ENCODE measurements at regions of chr22 and their contacts with region 1.

Region 1: GRCh38 chr22:41197038-41197972 is 7.8 kb upstream of the L3MBTL2 start:
- DNase-seq: peak; percentile 84 to 88
- ATAC-seq: peak; percentile 95 to 97 (median 96)
- H3K4me3 ChIP-seq: peak overlapping the region; percentile 70 to 89 (median 85)
- H3K27ac ChIP-seq: peak overlapping the region in 8 of 10 donors; percentile 29 to 75 (median 54)
- H3K4me1 ChIP-seq: peaks cover 5 to 19% (median 17%) of the 10 kb centered on the region in 9 donors
- H3K27me3 ChIP-seq: no peaks in the 10 kb centered on the region
- CTCF ChIP-seq: peak in 5 of 9 donors; percentile 11 to 36 (median 21)

Region 2: GRCh38 chr22:41229730-41230400 is 32.6 kb after region 1 on chr22:
- intact Hi-C with region 1: loop called in 2 of 10 experiments (anchors 5 kb)
- DNase-seq: peak; percentile 51 to 61
- ATAC-seq: peak; percentile 51 to 83 (median 72)
- H3K4me3 ChIP-seq: no peak overlapping the region
- H3K27ac ChIP-seq: peak overlapping the region in 9 of 10 donors; percentile 47 to 81 (median 63)
- H3K4me1 ChIP-seq: peaks cover 10 to 45% (median 40%) of the 10 kb centered on the region in 9 donors
- H3K27me3 ChIP-seq: no peaks in the 10 kb centered on the region
- CTCF ChIP-seq: no peak

Region 3: DNA sequence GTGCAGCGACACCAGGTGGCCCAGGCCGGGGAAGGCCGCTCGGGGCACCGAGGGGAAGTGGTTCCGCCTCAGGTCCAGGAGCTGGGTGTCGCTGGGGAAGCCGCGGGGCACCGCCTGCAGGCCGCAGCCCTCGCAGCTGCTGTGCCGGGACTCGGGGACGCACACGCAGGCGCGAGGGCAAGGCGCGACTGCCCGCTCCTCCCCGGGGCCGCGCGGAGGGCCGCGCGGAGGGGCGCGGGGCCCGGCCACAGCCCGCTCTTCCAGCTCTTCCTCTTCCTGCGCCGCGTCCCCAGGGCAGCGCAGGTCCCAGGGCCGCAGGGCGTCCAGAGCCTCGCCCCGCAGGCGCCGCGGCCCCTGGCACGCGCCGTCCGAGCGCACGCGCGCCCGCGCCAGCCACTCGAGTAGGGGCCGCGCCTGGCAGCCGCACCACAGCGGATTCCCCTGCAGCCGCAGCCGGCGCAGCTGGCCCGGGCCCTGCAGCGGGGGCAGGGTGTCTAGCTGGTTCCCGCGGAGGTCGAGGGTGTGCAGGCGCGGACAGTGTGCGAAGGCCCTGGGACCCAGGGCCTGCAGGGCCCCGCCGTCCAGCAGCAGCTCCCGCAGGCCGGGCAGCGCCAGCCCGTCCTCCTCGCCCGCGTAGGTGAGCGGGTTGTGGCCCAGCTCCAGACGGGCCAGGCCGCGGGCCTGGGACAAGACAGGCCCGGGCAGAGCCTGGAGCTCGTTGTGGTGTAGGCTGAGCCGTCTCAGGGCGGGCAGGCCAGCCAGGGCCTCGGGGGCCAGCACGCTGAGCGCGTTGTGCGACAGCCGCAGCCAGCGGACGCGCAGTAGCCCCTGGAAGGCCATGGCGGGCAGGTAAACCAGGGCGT is 40.6 kb after region 1 on chr22:
- intact Hi-C with region 1: loop called in 2 of 10 experiments (anchors 5 kb)
- DNase-seq: peak; percentile 64 to 77
- ATAC-seq: peak; percentile 35 to 87 (median 74)
- H3K4me3 ChIP-seq: peak overlapping the region in 9 of 10 donors; percentile 28 to 55 (median 50)
- H3K27ac ChIP-seq: peak overlapping the region in 9 of 10 donors; percentile 46 to 76 (median 64)
- H3K4me1 ChIP-seq: peaks cover 8 to 37% (median 20%) of the 10 kb centered on the region in 9 donors
- H3K27me3 ChIP-seq: no peaks in the 10 kb centered on the region
- CTCF ChIP-seq: peak in 8 of 9 donors; percentile 35 to 77 (median 67)

Region 4: GRCh38 chr22:41261541-41262249 is 64.4 kb after region 1 on chr22:
- intact Hi-C with region 1: loop called in 1 of 10 experiments (anchors 2 kb)
- DNase-seq: peak in 1 of 2 donors; percentile 37
- ATAC-seq: peak; percentile 40 to 71 (median 59)
- H3K4me3 ChIP-seq: no peak overlapping the region
- H3K27ac ChIP-seq: peak overlapping the region; percentile 37 to 88 (median 82)
- H3K4me1 ChIP-seq: peaks cover 0 to 36% (median 17%) of the 10 kb centered on the region in 9 donors
- H3K27me3 ChIP-seq: no peaks in the 10 kb centered on the region
- CTCF ChIP-seq: peak in 1 of 9 donors; percentile 2

Region 5: GRCh38 chr22:41285820-41286638 is 88.7 kb after region 1 on chr22 and contains the start of gene RANGAP1:
- intact Hi-C with region 1: loop called in 2 of 10 experiments (anchors 5 to 10 kb)
- DNase-seq: peak; percentile 98
- ATAC-seq: peak; percentile 99 to 100 (median 100)
- H3K4me3 ChIP-seq: peak within 1 kb of the TSS; percentile 69 to 98 (median 90)
- H3K27ac ChIP-seq: peak within 1 kb of the TSS; percentile 13 to 94 (median 83)
- H3K4me1 ChIP-seq: peaks cover 0 to 31% (median 25%) of the 10 kb centered on the region in 9 donors
- H3K27me3 ChIP-seq: no peaks in the 10 kb centered on the region
- CTCF ChIP-seq: peak in 7 of 9 donors; percentile 4 to 54 (median 36)
- total RNA-seq, gene RANGAP1: 26.5 to 53.8 (median 31.4) TPM

Region 6: DNA sequence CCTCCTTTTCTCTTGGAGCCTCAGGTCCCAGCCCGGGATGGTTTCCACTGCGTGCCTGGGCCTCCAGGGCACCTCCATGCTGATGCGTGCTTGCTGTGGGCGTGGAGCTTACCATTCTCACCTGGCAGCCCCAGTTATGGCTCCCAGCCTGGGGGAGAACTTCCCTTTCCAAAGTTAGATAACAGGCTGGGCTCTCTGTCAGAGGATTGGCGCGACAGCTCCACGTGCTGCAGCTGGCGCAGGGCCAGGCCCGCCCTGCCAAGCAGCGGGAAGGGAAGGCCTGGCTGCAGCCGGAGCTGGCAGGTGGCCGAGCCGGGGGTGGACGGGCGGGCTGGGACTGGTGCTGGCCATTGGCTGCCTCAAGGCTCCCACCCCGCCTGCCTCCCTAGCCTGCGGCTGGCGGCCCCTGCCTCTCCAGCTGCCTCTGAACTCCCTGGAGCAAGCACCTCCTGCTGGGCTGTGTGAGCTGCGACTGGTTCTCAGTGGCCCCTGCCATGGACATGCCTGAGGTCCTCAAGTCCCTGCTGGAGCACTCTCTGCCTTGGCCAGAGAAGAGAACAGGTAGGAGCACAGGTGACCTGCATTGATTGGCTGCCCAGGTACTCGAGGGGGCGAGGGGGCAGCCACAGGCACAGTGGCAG is 169.9 kb after region 1 on chr22:
- intact Hi-C with region 1: loop called in 1 of 10 experiments (anchors 10 kb)
- DNase-seq: peak; percentile 97 to 98
- ATAC-seq: peak; percentile 96 to 97 (median 97)
- H3K4me3 ChIP-seq: peak overlapping the region; percentile 0 to 66 (median 47)
- H3K27ac ChIP-seq: peak overlapping the region in 8 of 10 donors; percentile 10 to 87 (median 74)
- H3K4me1 ChIP-seq: peaks cover 15 to 41% (median 27%) of the 10 kb centered on the region in 9 donors
- H3K27me3 ChIP-seq: no peaks in the 10 kb centered on the region
- CTCF ChIP-seq: peak in 7 of 9 donors; percentile 31 to 61 (median 50)

Measured in heart right ventricle (tissue), 16 donors.